ENCODE measurements at regions of chr5 and their contacts with region 1.

Region 1: DNA sequence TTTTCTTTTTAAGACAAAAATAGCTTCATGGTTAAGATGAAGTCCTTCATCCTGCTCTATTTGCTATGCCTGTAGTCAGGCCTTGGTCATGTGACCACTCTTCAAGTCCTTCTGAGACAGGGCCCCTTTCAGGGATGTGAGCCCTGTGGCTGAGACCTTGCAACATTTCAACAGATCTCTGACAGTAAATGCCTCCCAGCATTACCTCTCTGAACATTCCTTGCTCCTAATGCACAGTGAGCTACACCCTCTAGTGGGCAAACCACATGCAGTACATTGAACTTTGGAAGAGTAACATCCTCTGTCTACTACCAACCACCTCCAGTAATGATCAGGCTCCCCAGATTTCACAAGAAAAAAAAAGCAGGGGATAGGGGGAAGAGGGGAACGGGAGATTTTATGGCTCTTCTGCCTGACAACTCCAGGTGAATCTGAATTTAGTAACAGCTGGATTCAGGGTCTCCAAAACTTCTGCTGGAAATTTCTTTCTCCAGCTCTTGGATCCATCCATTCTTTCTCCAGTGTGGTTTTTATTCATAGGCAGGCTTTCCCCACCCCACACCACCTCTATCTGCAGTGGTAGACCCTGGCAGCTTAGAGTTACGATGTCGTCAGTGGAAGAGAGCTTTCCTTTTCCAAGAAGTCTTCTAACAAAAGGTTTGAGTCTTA is 8.9 kb upstream of the FBXO38 start:
- DNase-seq: no peak
- H3K4me3 ChIP-seq: no peak overlapping the region
- CTCF ChIP-seq: peak; percentile 83

Region 2: GRCh38 chr5:147857302-147858129 is 517.3 kb before region 1 on chr5:
- CTCF ChIA-PET with region 1: interaction called, 13 read pairs
- POLR2A ChIA-PET with region 1: no interaction called
- DNase-seq: peak; percentile 7
- H3K4me3 ChIP-seq: no peak overlapping the region
- CTCF ChIP-seq: peak; percentile 68

Region 3: GRCh38 chr5:148179234-148179824 is 195.5 kb before region 1 on chr5:
- CTCF ChIA-PET with region 1: interaction called, 38 read pairs
- POLR2A ChIA-PET with region 1: no interaction called
- DNase-seq: peak; percentile 5
- H3K4me3 ChIP-seq: no peak overlapping the region
- CTCF ChIP-seq: peak; percentile 53

Region 4: DNA sequence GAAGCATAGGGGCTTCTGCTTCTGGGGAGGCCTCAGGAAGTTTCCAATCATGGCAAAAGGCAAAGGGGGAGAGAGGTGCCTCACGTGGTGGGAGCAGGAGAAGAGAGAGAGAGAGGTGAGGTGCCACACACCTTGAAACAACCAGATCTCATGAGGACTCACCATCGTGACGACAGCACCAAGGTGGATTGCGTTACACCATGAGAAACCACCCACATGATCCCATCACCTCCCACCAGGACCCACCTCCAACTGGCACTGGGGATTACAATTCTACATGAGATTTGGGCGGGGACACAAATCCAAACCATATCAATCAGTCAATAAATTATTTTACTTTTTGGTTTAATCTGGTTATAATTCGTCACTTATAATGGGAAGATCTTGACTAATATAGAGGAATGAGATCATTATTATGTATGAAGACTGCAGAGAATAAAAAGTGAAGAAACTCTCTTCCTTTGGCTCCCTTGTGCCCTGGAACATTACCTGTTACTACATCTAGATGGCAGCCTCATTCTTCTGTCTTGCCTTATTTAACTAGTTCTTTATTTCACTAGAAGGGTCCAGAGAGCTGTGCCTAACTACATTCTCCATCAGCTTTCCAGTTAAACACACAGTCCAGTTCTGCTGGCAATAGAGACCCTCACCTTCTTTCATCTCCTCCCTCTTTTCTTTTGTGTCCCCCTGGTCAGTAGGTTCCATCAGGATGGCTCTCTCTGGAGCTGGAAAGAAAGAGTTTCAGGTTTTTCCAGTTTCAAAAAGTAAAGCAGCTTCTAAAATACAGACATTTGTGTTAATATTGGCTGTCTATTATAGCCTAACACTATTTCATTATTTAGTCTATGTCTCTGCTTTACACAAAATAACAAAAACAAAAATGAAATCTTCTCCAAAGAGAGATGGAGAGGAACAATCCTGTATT is 84.3 kb before region 1 on chr5:
- CTCF ChIA-PET with region 1: interaction called, 18 read pairs
- POLR2A ChIA-PET with region 1: no interaction called
- DNase-seq: no peak
- H3K4me3 ChIP-seq: no peak overlapping the region
- CTCF ChIP-seq: peak; percentile 38

Region 5: DNA sequence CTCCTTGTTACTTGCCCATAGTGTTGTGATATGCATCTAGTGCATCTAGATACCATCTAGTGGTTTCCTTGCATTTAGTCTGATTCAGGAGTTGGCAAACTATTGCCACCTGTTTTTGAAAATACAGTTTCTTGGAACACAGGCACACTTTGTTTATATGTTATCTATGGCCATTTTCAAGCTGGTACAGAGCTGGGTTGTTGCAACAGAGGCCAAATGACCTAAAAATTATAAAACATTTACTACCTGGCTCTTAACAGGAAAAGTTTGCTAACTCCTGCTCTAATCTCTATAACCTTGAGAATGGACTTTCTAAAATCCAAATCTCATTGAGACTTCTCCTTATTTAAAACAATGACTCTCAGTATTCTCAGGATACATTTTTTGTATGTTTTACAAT is 10.5 kb before region 1 on chr5:
- CTCF ChIA-PET with region 1: interaction called, 15 read pairs
- POLR2A ChIA-PET with region 1: no interaction called
- DNase-seq: no peak
- H3K4me3 ChIP-seq: no peak overlapping the region
- CTCF ChIP-seq: no peak

Region 6: DNA sequence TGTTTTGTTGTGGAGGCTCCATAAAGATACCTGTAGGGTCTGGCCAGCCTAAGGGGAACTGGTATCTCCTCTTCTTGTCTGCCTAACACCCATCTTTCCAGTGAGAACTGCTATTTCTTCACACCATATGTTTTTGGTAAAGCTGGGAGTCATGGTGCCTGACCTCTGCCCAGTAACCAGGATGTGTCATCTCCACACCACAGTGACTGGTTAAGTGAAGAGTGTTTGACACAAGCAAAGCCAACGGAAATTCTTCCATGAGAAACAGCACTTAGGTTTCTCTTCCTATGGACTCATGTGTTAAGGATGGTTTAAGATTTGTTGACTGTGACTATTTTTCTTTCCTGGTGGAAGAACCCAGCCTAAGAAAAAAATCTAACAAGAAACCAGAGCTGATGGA is 168.0 kb after region 1 on chr5:
- CTCF ChIA-PET with region 1: no interaction called
- POLR2A ChIA-PET with region 1: no interaction called
- DNase-seq: no peak
- H3K4me3 ChIP-seq: no peak overlapping the region
- CTCF ChIP-seq: no peak

Measured in AG04449 (cell line).